ENCODE measurements at regions of chr9 and their contacts with region 1.

Region 1: GRCh38 chr9:124708633-124709291 is 62.3 kb downstream of the NR6A1 start:
- DNase-seq: no peak
- H3K4me3 Mint-ChIP-seq: no peak overlapping the region
- H3K27ac Mint-ChIP-seq: no peak overlapping the region
- H3K4me1 Mint-ChIP-seq: no peaks in the 10 kb centered on the region
- H3K27me3 Mint-ChIP-seq: peaks cover 18% of the 10 kb centered on the region

Region 2: GRCh38 chr9:124511426-124511840 is 197.3 kb before region 1 on chr9:
- CTCF ChIA-PET with region 1: no interaction called
- POLR2A ChIA-PET with region 1: no interaction called
- DNase-seq: no peak
- H3K4me3 Mint-ChIP-seq: no peak overlapping the region
- H3K27ac Mint-ChIP-seq: no peak overlapping the region
- H3K4me1 Mint-ChIP-seq: no peaks in the 10 kb centered on the region
- H3K27me3 Mint-ChIP-seq: no peaks in the 10 kb centered on the region

Region 3: GRCh38 chr9:124617471-124618141 is 91.2 kb before region 1 on chr9:
- CTCF ChIA-PET with region 1: interaction called, 64 read pairs
- POLR2A ChIA-PET with region 1: no interaction called
- DNase-seq: peak; percentile 75
- H3K4me3 Mint-ChIP-seq: no peak overlapping the region
- H3K27ac Mint-ChIP-seq: no peak overlapping the region
- H3K4me1 Mint-ChIP-seq: no peaks in the 10 kb centered on the region
- H3K27me3 Mint-ChIP-seq: peaks cover 8% of the 10 kb centered on the region

Region 4: GRCh38 chr9:124743686-124744348 is 35.1 kb after region 1 on chr9:
- CTCF ChIA-PET with region 1: interaction called, 11 read pairs
- POLR2A ChIA-PET with region 1: interaction called, 4 read pairs
- DNase-seq: no peak
- H3K4me3 Mint-ChIP-seq: no peak overlapping the region
- H3K27ac Mint-ChIP-seq: no peak overlapping the region
- H3K4me1 Mint-ChIP-seq: peaks cover 13% of the 10 kb centered on the region
- H3K27me3 Mint-ChIP-seq: peaks cover 10% of the 10 kb centered on the region

Measured in activated CD4-positive, alpha-beta memory T cell treated with anti-CD3 and anti-CD28 coated beads, Interleukin-2, amount 10 ng/mL, durations not matched to agents 7 days and 5 days (primary cell).